Mammary epithelial cell (primary cell): ENCODE measurements at regions of chr6 and their contacts with region 1.

Region 1: DNA sequence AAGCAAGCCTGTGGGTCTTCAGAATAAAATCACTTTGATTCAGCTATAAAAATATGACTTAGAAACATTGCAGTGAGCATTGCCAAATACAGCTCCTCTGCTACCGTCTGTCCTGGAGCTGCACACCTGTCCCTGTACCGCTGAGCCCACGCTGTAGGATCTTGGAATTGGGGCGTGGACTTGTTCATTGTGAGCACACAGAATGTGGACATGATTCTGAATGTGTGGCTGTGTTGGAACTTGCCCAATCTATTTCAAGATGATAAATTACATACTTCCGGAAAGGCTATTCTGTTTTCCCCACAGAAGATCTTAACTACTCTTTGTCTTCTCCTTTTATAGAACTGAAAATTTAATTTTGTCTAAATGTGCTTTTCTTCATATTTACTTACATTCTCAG is 107.3 kb downstream of the UST start:
- DNase-seq: peak; percentile 80
- H3K4me3 ChIP-seq: no peak overlapping the region
- H3K27ac ChIP-seq: no peak overlapping the region
- H3K4me1 ChIP-seq: peaks cover 41% of the 10 kb centered on the region
- H3K27me3 ChIP-seq: no peaks in the 10 kb centered on the region
- CTCF ChIP-seq: no peak

Region 2: DNA sequence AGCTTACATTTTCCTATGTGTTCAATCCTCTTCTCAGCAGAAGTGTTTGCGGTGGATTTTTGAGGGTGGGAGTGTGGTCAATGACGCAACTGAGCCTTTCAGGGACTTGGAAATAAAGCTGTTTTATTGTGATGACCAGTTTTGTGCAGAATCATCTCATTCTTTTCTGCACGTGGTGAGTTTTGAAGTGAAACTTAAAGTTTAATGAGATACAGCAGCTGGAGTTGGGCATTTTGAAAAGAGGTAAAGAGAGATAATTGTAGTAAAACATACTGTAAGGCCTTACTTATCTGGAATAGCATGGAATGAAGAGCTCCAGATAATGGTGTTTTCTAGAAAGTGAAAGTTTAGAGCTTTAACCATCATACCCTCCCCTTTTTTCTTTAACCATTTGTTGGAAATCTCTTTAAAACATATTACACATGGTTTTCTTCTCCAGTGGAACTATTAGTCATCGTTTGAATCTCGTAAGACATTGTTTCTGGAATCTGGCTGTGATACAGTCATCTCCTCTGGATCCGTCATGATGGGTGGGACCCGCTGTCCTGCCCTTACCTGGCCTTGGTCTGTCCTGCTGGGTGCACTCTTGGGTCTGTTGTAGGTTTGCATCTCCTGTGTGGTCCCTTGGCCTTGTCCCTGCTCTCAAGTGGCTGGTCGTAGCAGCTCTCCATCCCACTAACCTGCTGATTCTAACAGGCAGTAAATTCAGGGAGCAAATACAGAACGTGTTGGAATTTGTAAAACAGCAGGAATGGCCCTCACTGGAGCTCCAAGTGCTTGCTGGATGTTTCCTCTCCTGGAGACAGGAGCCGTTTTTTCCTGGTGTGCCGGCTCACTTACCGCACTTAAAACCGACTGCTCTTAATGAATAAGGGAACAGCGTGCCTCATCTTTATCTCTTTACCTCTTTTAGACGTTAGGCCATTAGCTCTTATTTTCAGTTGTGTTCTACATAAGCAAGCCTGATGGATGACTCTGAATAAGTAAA is 77.5 kb before region 1 on chr6:
- CTCF ChIA-PET with region 1: no interaction called
- dilution Hi-C with region 1: no loop called
- in situ Hi-C with region 1: no loop called
- intact Hi-C with region 1: loop called (anchors 5 kb)
- DNase-seq: peak; percentile 84
- H3K4me3 ChIP-seq: no peak overlapping the region
- H3K27ac ChIP-seq: peak overlapping the region; percentile 50
- H3K4me1 ChIP-seq: peaks cover 11% of the 10 kb centered on the region
- H3K27me3 ChIP-seq: no peaks in the 10 kb centered on the region
- CTCF ChIP-seq: no peak

Region 3: DNA sequence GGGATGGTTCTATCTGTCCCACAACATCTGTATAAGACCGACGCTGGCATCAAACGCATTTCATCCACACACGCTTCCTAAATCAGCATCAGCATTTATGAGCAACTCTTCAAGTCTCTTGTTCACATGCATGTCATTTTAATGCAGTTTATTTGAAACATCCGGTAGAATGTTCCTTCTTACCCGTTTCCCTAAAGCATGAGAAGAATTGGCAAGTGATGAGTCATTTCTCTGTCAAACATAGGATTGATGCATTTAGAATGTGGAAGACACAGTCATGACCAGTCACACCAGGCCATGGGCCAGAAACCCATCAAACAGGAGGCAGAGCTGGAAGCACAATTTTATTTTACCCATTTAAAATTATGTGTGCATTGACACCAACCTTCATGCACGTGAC is 15.5 kb after region 1 on chr6:
- CTCF ChIA-PET with region 1: no interaction called
- dilution Hi-C with region 1: no loop called
- in situ Hi-C with region 1: no loop called
- intact Hi-C with region 1: loop called (anchors 2 kb)
- DNase-seq: peak; percentile 87
- H3K4me3 ChIP-seq: no peak overlapping the region
- H3K27ac ChIP-seq: peak overlapping the region; percentile 9
- H3K4me1 ChIP-seq: peaks cover 52% of the 10 kb centered on the region
- H3K27me3 ChIP-seq: no peaks in the 10 kb centered on the region
- CTCF ChIP-seq: no peak

Region 4: DNA sequence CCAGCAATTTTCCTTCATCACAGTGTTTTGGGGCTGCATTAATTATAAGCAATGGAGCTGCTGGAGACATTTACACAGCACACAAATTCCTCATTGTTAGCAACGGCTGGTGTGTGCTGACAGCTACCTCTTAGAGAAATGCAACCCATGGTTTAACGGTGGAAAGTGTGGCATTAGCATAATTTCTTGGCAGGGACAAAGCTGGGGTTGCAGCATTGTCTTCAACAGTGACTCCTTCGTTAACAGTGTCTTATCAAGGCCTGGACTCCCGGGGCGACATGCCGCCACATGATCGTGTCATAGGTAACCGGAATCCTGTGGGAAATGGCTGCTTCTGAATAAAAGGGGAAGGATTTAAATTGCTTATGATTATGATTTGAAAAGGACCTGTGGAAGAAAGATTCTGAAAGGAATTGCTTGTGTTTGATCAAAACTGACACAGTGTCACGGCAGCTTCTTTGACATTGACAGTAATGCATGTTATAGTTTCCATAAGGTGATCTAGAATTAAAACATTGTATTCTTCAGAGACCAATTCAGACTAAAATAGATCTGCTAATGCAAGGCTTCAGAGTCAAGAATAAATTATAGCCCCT is 20.7 kb after region 1 on chr6:
- CTCF ChIA-PET with region 1: no interaction called
- dilution Hi-C with region 1: no loop called
- in situ Hi-C with region 1: no loop called
- intact Hi-C with region 1: loop called (anchors 2 kb)
- DNase-seq: peak; percentile 82
- H3K4me3 ChIP-seq: no peak overlapping the region
- H3K27ac ChIP-seq: peak overlapping the region; percentile 9
- H3K4me1 ChIP-seq: peaks cover 32% of the 10 kb centered on the region
- H3K27me3 ChIP-seq: no peaks in the 10 kb centered on the region
- CTCF ChIP-seq: no peak